ENCODE measurements at regions of chr7 and their contacts with region 1.

Region 1: DNA sequence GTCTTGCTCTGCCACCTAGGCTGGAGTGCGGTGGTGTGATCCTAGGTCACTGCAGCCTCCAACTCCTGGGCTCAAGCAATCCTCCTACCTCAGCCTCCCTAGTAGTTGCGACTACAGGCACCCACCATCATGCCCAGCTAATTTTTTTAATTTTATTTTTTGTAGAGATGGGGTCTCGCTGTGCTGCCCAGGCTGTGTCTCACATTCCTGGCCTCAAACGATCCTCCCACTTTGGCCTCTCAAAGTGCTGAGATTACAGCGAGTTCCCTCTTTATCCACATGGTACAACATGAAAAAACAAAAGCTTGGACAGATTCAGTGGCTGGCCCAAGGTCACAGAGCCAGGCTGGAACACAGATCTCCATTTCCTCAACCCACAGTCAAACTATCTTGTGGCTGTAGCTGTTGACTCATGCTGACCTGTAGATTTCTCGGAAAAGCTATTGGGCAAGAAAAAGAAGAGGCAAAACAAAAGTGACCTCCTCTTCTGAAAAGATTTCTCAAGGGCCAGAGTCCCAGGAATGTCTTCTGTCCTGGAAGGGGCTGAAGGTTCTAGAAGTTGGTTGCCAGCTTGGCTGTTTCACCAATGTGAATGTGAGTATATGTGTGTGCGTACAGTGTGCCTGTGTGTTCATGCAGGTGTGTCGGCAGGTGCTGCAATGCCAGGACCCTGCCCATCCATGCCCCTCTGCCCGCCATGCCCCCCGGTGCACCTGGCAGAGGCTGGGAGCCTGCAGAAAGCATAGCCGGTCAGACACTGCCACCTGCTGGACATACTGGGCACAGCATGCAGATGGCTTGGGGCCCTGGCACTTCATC is 28.4 kb downstream of the TMEM130 start:
- DNase-seq: peak; percentile 73
- ATAC-seq: peak; percentile 73
- H3K4me3 Mint-ChIP-seq: no peak overlapping the region
- H3K27ac Mint-ChIP-seq: no peak overlapping the region
- H3K4me1 Mint-ChIP-seq: no peaks in the 10 kb centered on the region
- H3K27me3 Mint-ChIP-seq: peaks cover 2% of the 10 kb centered on the region

Region 2: DNA sequence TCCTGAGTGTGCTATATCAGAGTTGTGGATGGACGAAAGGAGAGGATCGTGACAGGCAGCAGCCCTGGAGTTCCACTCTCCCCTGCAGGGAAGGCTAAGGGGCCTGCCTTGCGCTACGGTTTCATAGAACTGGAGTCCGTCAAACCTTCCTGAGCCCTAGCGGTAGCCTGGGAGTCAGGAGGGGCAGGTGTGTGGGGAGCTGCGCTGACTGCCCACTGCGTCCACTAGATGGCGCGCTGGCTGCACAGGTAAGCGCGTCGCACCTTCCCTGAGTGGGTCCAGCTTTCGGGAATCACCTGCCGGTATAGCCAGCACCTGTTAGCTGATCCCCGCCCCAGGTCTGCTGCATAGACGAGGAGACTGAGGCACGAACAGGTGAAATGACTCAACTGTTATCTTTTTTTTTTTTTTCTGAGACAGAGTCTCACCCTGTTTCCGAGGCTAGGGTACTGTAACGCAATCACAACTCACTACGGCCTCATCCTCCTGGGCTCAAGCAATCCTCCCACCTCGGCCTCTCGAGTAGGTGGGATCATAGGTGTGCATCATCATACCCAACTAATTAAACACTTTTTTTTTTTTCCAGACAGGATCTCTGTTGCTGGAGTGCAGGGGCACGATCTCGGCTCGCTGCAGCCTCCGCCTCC is 420.3 kb before region 1 on chr7:
- CTCF ChIA-PET with region 1: interaction called, 17 read pairs
- POLR2A ChIA-PET with region 1: no interaction called
- DNase-seq: peak; percentile 66
- ATAC-seq: peak; percentile 82
- H3K4me3 Mint-ChIP-seq: no peak overlapping the region
- H3K27ac Mint-ChIP-seq: no peak overlapping the region
- H3K4me1 Mint-ChIP-seq: no peaks in the 10 kb centered on the region
- H3K27me3 Mint-ChIP-seq: no peaks in the 10 kb centered on the region

Region 3: DNA sequence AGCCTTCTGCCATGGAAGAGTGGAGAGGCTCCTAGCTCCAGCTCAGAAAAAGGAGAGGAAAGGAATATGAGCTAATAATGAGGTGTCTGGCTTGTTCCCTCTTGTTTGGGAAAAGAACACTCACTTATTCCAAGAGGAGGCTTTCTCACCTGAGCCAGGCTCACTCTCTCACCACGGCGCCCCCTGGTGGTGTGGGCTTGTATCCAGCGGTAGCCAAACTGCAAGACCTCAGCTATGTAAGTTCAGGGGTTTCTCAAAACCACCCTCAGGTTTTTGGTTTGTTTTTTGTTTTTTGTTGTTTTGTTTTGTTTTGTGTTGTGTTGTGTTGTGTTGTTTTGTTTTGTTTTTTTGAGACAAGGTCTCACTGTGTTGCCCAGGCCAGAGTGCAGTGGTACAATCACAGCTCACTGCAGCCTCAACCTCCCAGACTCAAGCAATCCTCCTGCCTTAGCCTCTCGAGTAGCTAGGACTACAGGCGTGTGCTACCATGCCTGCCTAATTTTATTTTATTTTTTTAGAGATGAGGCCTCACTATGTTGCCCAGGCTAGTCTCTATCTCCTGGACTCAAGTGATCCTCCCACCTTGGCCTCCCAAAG is 95.6 kb before region 1 on chr7:
- CTCF ChIA-PET with region 1: interaction called, 10 read pairs
- POLR2A ChIA-PET with region 1: no interaction called
- DNase-seq: peak; percentile 75
- ATAC-seq: peak; percentile 57
- H3K4me3 Mint-ChIP-seq: no peak overlapping the region
- H3K27ac Mint-ChIP-seq: no peak overlapping the region
- H3K4me1 Mint-ChIP-seq: no peaks in the 10 kb centered on the region
- H3K27me3 Mint-ChIP-seq: no peaks in the 10 kb centered on the region

Measured in activated CD8-positive, alpha-beta T cell treated with anti-CD3 and anti-CD28 coated beads, Interleukin-2, amount 10 ng/mL, durations not matched to agents 7 days and 5 days (primary cell).